ENCODE measurements at regions of chr4 and their contacts with region 1.

Region 1: DNA sequence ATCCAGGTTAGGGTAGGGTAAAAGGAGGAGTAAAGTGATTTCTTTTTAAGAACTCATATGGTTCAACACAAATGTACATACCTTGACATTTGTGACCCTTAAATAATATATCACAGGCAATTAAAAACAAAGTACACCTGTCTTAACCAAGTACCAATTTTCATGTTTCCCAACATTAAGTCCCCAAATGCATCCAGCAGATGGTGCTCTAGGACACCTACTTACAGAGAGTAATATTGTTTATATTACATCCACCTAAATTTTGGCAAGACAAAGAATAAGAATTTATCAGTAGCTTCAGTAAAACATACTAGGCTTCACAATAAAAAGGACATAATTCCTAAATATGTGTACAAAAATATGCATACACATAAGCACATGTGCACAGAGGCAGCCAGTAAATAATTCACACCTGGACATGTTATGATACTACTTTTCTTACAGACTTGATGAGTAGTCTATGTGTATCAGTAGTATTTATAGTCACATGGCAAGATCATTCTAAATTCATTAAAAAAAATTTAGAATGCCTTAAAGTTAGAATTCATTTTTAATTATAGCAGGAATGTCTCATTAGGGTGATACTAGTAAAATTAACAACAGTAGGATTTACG is 219.7 kb downstream of the DCLK2 start:
- DNase-seq: no peak
- H3K4me3 ChIP-seq: no peak overlapping the region
- H3K27ac ChIP-seq: no peak overlapping the region
- H3K4me1 ChIP-seq: no peaks in the 10 kb centered on the region
- H3K27me3 ChIP-seq: no peaks in the 10 kb centered on the region
- CTCF ChIP-seq: peak; percentile 19 to 70 (median 47)

Region 2: DNA sequence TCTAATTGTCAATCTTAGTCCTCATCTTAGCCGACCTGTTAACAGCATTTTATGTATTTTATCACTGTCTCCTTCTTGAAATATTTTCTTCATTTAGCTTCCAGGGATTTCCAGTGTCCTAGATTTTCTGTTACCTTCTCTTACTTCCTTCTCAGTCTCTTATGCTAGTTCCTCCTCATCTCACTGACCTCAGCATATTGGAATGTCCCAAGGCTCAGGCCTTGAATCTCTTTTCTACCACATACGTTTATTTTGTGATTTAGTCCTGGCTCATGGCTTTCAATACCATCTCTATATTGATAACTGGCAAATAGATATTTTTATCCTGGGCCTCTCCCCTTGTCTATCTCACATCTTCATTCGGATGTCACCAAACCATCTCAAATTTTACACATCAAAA is 543.4 kb before region 1 on chr4:
- intact Hi-C with region 1: no loop called
- DNase-seq: no peak
- H3K4me3 ChIP-seq: no peak overlapping the region
- H3K27ac ChIP-seq: no peak overlapping the region
- H3K4me1 ChIP-seq: no peaks in the 10 kb centered on the region
- H3K27me3 ChIP-seq: no peaks in the 10 kb centered on the region
- CTCF ChIP-seq: no peak

Region 3: GRCh38 chr4:150224896-150225591 is 72.9 kb before region 1 on chr4:
- intact Hi-C with region 1: no loop called
- DNase-seq: no peak
- H3K4me3 ChIP-seq: no peak overlapping the region
- H3K27ac ChIP-seq: no peak overlapping the region
- H3K4me1 ChIP-seq: peaks cover 3 to 5% of the 10 kb centered on the region in 2 donors
- H3K27me3 ChIP-seq: no peaks in the 10 kb centered on the region
- CTCF ChIP-seq: no peak

Region 4: GRCh38 chr4:150510176-150510865 is 212.4 kb after region 1 on chr4:
- intact Hi-C with region 1: loop called (anchors 10 kb)
- DNase-seq: no peak
- H3K4me3 ChIP-seq: peak overlapping the region in 1 of 2 donors; percentile 16
- H3K27ac ChIP-seq: peak overlapping the region; percentile 51 to 55
- H3K4me1 ChIP-seq: no peaks in the 10 kb centered on the region
- H3K27me3 ChIP-seq: no peaks in the 10 kb centered on the region
- CTCF ChIP-seq: no peak

Region 5: DNA sequence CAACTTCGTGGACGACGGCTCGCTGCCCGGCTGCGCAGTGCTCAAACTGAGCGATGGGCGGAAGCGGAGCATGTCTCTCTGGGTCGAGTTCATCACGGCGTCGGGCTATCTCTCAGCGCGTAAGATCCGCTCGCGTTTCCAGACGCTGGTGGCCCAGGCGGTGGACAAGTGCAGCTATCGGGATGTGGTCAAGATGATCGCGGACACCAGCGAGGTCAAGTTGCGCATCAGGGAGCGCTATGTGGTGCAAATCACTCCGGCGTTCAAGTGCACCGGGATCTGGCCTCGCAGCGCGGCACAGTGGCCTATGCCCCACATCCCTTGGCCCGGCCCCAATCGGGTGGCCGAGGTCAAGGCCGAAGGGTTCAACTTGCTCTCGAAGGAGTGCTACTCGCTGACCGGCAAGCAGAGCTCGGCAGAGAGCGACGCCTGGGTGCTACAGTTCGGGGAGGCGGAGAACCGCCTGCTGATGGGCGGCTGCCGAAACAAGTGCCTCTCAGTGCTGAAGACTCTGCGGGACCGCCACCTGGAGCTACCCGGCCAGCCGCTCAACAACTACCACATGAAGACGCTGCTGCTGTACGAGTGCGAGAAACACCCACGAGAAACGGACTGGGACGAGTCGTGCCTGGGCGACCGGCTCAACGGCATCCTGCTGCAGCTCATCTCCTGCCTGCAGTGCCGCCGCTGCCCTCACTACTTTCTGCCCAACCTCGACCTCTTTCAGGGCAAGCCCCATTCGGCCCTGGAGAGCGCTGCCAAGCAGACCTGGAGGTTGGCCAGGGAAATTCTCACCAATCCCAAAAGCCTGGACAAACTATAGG is 285.5 kb after region 1 on chr4:
- intact Hi-C with region 1: loop called (anchors 5 kb)
- DNase-seq: no peak
- H3K4me3 ChIP-seq: peak overlapping the region; percentile 18 to 51
- H3K27ac ChIP-seq: no peak overlapping the region
- H3K4me1 ChIP-seq: no peaks in the 10 kb centered on the region
- H3K27me3 ChIP-seq: no peaks in the 10 kb centered on the region
- CTCF ChIP-seq: no peak